B cell (primary cell): ENCODE measurements at regions of chr10 and their contacts with region 1.

Region 1: GRCh38 chr10:14959276-14960057 is at the start of gene MEIG1:
- DNase-seq: peak; percentile 94
- ATAC-seq: peak; percentile 83
- H3K4me3 ChIP-seq: peak within 1 kb of the TSS; percentile 83 to 99 (median 88)
- H3K4me3 Mint-ChIP-seq: peak within 1 kb of the TSS; percentile 99
- H3K27ac ChIP-seq: peak within 1 kb of the TSS; percentile 74 to 88
- H3K27ac Mint-ChIP-seq: peak within 1 kb of the TSS; percentile 98
- H3K4me1 ChIP-seq: peaks cover 5 to 17% of the 10 kb centered on the region in 2 donors
- H3K4me1 Mint-ChIP-seq: peaks cover 22% of the 10 kb centered on the region
- H3K27me3 ChIP-seq: no peaks in the 10 kb centered on the region
- H3K27me3 Mint-ChIP-seq: no peaks in the 10 kb centered on the region
- CTCF ChIP-seq: no peak
- total RNA-seq, gene MEIG1: 0.69 TPM in 1 of 2 replicates, not detected in the other

Region 2: DNA sequence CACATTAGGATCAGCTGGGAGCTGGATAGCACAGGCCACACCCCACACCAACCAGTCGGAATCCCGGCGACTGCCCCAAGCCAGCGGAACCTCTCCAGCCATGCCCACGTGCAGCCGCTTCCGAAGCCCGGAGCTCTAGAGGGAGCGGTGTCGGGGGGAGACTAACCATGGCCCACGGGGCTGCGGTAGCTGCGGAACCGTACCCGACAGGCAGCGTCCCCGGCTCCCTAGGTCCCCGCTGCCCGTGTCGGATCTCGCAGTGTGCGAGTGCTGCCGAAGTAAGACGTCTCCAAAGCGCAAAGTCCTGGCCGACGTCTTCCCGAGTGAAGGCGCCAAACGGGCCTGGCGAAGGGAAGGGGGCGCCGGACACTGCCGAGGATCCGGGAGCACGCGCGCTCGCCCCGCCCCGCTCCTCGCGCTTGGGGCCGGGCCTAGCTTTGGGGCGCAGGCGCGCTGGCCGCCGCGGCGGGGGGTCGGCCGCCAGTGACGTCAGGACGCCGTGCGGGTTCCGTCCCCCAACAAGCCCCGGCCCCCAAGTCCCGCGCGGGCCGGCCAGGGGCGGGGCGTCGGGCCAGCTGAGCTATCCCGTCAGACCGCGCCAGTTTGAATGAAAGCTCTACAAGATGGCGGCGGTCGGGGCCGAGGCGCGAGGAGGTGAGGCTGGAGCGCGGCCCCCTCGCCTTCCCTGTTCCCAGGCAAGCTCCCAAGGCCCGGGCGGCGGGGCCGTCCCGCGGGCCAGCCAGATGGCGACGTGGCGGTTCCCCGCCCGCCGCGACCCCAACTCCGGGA is 81.0 kb before region 1 on chr10 and contains the start of gene SUV39H2:
- CTCF ChIA-PET with region 1: interaction called, 4 read pairs
- POLR2A ChIA-PET with region 1: interaction called, 4 read pairs
- intact Hi-C with region 1: loop called (anchors 1 kb)
- DNase-seq: peak; percentile 96
- ATAC-seq: peak; percentile 92
- H3K4me3 ChIP-seq: peak within 1 kb of the TSS; percentile 53 to 98 (median 94)
- H3K4me3 Mint-ChIP-seq: peak within 1 kb of the TSS; percentile 96
- H3K27ac ChIP-seq: peak within 1 kb of the TSS; percentile 64 to 80
- H3K27ac Mint-ChIP-seq: peak within 1 kb of the TSS; percentile 87
- H3K4me1 ChIP-seq: peaks cover 17 to 23% of the 10 kb centered on the region in 2 donors
- H3K4me1 Mint-ChIP-seq: peaks cover 28% of the 10 kb centered on the region
- H3K27me3 ChIP-seq: peaks cover 0 to 6% (median 0%) of the 10 kb centered on the region in 4 experiments
- H3K27me3 Mint-ChIP-seq: no peaks in the 10 kb centered on the region
- CTCF ChIP-seq: no peak
- total RNA-seq, gene SUV39H2: 3.2 and 3.5 TPM in 2 replicates

Region 3: DNA sequence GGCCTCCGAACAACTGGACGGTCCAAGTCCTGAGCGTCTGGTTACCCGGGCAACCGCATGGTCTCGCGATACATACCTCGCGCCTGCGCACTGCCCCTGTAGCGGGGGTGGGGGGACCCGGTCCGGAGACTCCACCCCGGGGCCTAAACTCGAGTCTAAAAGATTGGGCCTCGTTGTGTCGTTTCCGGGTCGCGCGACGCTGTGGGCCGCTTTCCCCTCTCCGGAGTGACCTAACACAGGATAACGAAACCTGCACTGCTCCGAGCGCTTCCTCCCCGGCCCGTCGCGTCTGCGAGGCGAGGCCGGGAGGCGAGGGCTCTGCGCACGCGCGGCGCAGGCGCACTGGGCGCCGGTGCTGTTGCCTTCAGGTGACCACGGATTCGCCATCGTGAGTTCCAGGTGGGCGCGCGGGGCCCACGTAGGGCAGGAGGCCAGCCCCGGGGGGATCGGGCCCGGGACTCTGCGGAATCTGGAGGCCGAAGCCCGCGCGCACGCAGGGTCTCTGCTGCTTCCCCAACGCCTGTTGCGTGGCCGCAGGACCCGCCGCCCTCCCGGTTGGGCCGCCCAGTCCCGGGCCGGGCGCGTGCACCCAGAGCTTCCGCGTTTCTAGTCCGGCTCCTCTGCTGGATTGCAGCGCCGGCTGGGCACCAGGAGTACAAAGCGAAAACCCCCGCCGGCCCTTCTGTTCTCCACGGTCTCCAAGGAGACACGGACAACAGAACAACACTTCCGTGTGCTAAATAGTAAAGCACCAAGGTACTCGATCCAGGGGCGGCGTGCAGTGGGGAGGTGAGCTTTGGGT is 137.7 kb after region 1 on chr10 and contains the start of gene RPP38:
- CTCF ChIA-PET with region 1: no interaction called
- POLR2A ChIA-PET with region 1: interaction called, 3 read pairs
- intact Hi-C with region 1: loop called (anchors 1 kb)
- DNase-seq: peak; percentile 98
- ATAC-seq: peak; percentile 75
- H3K4me3 ChIP-seq: peak within 1 kb of the TSS; percentile 80 to 91 (median 87)
- H3K4me3 Mint-ChIP-seq: peak within 1 kb of the TSS; percentile 93
- H3K27ac ChIP-seq: peak within 1 kb of the TSS; percentile 92 to 96
- H3K27ac Mint-ChIP-seq: peak within 1 kb of the TSS; percentile 94
- H3K4me1 ChIP-seq: peaks cover 23 to 27% of the 10 kb centered on the region in 2 donors
- H3K4me1 Mint-ChIP-seq: peaks cover 26% of the 10 kb centered on the region
- H3K27me3 ChIP-seq: no peaks in the 10 kb centered on the region
- H3K27me3 Mint-ChIP-seq: no peaks in the 10 kb centered on the region
- CTCF ChIP-seq: no peak
- total RNA-seq, gene RPP38: 24.5 and 24.8 TPM in 2 replicates